Ovary (tissue), 10 donors: ENCODE measurements at regions of chr22 and their contacts with region 1.

Region 1: DNA sequence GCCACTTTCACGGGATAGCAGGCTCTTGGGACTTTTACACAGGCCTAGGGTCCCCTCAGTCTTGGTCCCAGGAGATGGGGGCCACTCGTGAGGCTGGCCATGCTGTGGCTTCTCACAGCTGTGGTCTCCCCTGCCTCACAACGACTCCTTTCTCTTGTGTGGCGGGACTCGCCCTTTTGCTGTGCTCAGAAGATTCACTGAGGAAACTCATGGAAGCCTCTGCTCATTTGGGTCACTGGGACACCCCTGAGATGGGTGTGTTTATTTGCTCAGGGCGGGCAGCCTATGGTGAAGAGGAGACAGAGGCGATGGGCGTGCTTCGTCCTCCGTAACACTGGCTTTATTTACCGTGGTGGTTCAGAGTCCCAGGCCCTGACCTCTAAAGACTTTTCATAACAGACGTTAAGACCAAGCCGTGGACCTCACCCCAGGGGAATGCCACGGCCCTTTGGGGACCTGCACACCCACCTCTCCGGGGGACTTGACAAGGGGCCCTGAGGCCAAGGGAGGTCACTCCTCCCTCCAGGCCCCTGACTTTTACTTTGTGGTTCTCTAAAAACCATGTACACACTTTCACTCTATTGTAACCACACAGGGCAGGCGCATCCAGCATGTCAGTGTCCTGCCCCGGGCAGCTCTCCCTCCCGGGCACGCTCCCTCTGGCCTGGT is 15.5 kb downstream of the TEF start:
- DNase-seq: no peak
- H3K4me3 ChIP-seq: no peak overlapping the region
- H3K27ac ChIP-seq: no peak overlapping the region
- H3K4me1 ChIP-seq: peaks cover 6% of the 10 kb centered on the region
- H3K27me3 ChIP-seq: no peaks in the 10 kb centered on the region
- CTCF ChIP-seq: no peak
- EP300 ChIP-seq: no peak
- POLR2A ChIP-seq: no peak

Region 2: GRCh38 chr22:41603873-41604332 is 206.6 kb after region 1 on chr22:
- intact Hi-C with region 1: loop called in 2 of 4 experiments (anchors 5 to 10 kb)
- DNase-seq: no peak
- H3K4me3 ChIP-seq: no peak overlapping the region
- H3K27ac ChIP-seq: no peak overlapping the region
- H3K4me1 ChIP-seq: no peaks in the 10 kb centered on the region
- H3K27me3 ChIP-seq: no peaks in the 10 kb centered on the region
- CTCF ChIP-seq: no peak
- EP300 ChIP-seq: no peak
- POLR2A ChIP-seq: no peak